ENCODE measurements at regions of chr21 and their contacts with region 1.

Region 1: GRCh38 chr21:26834181-26834945 is 10.8 kb downstream of the ADAMTS1 start:
- DNase-seq: no peak
- ATAC-seq: peak in 3 of 8 donors; percentile 2 to 11 (median 5)
- H3K4me3 ChIP-seq: no peak overlapping the region
- H3K27ac ChIP-seq: peak overlapping the region in 1 of 10 donors; percentile 9
- H3K4me1 ChIP-seq: peaks cover 0 to 38% (median 19%) of the 10 kb centered on the region in 9 donors
- H3K27me3 ChIP-seq: no peaks in the 10 kb centered on the region
- CTCF ChIP-seq: peak in 5 of 9 donors; percentile 19 to 40 (median 26)

Region 2: GRCh38 chr21:26769613-26770188 is 64.7 kb before region 1 on chr21:
- intact Hi-C with region 1: loop called in 3 of 10 experiments (anchors 5 to 10 kb)
- DNase-seq: peak in 1 of 2 donors; percentile 45
- ATAC-seq: peak in 3 of 8 donors; percentile 39 to 59 (median 49)
- H3K4me3 ChIP-seq: no peak overlapping the region
- H3K27ac ChIP-seq: no peak overlapping the region
- H3K4me1 ChIP-seq: peaks cover 0 to 3% (median 0%) of the 10 kb centered on the region in 9 donors
- H3K27me3 ChIP-seq: no peaks in the 10 kb centered on the region
- CTCF ChIP-seq: peak; percentile 38 to 80 (median 71)

Measured in heart right ventricle (tissue), 16 donors.